ENCODE measurements at regions of chr17 and their contacts with region 1.

Region 1: GRCh38 chr17:55407641-55408566 is 13.7 kb downstream of the MMD start:
- DNase-seq: peak in 1 of 2 experiments; percentile 49
- H3K4me3 ChIP-seq: no peak overlapping the region
- H3K4me3 Mint-ChIP-seq: peak overlapping the region; percentile 52
- H3K27ac Mint-ChIP-seq: peak overlapping the region; percentile 72
- H3K4me1 ChIP-seq: peaks cover 35% of the 10 kb centered on the region
- H3K4me1 Mint-ChIP-seq: peaks cover 20% of the 10 kb centered on the region
- H3K27me3 ChIP-seq: no peaks in the 10 kb centered on the region
- H3K27me3 Mint-ChIP-seq: no peaks in the 10 kb centered on the region
- CTCF ChIP-seq: no peak

Region 2: GRCh38 chr17:55394357-55395021 is 13.4 kb before region 1 on chr17:
- CTCF ChIA-PET with region 1: no interaction called
- POLR2A ChIA-PET with region 1: no interaction called
- intact Hi-C with region 1: loop called (anchors 1 kb)
- DNase-seq: peak in 1 of 2 experiments; percentile 27
- H3K4me3 ChIP-seq: no peak overlapping the region
- H3K4me3 Mint-ChIP-seq: peak overlapping the region; percentile 8
- H3K27ac Mint-ChIP-seq: peak overlapping the region; percentile 54
- H3K4me1 ChIP-seq: peaks cover 9% of the 10 kb centered on the region
- H3K4me1 Mint-ChIP-seq: peaks cover 13% of the 10 kb centered on the region
- H3K27me3 ChIP-seq: no peaks in the 10 kb centered on the region
- H3K27me3 Mint-ChIP-seq: no peaks in the 10 kb centered on the region
- CTCF ChIP-seq: no peak

Region 3: GRCh38 chr17:55421179-55421934 is 13.5 kb after region 1 on chr17 and contains the start of gene MMD:
- CTCF ChIA-PET with region 1: no interaction called
- POLR2A ChIA-PET with region 1: no interaction called
- intact Hi-C with region 1: loop called (anchors 1 kb)
- DNase-seq: peak in 1 of 2 experiments; percentile 46
- H3K4me3 ChIP-seq: peak within 1 kb of the TSS; percentile 78
- H3K4me3 Mint-ChIP-seq: peak within 1 kb of the TSS; percentile 90
- H3K27ac Mint-ChIP-seq: peak within 1 kb of the TSS; percentile 81
- H3K4me1 ChIP-seq: peaks cover 19% of the 10 kb centered on the region
- H3K4me1 Mint-ChIP-seq: peaks cover 64% of the 10 kb centered on the region
- H3K27me3 ChIP-seq: no peaks in the 10 kb centered on the region
- H3K27me3 Mint-ChIP-seq: no peaks in the 10 kb centered on the region
- CTCF ChIP-seq: no peak
- total RNA-seq, gene MMD: 38.6 and 39.0 TPM in 2 replicates

Region 4: GRCh38 chr17:55433629-55434305 is 25.9 kb after region 1 on chr17:
- CTCF ChIA-PET with region 1: interaction called, 4 read pairs
- POLR2A ChIA-PET with region 1: interaction called, 3 read pairs
- intact Hi-C with region 1: loop called (anchors 1 kb)
- DNase-seq: peak; percentile 64 to 68
- H3K4me3 ChIP-seq: no peak overlapping the region
- H3K4me3 Mint-ChIP-seq: peak overlapping the region; percentile 58
- H3K27ac Mint-ChIP-seq: peak overlapping the region; percentile 94
- H3K4me1 ChIP-seq: peaks cover 48% of the 10 kb centered on the region
- H3K4me1 Mint-ChIP-seq: peaks cover 51% of the 10 kb centered on the region
- H3K27me3 ChIP-seq: no peaks in the 10 kb centered on the region
- H3K27me3 Mint-ChIP-seq: no peaks in the 10 kb centered on the region
- CTCF ChIP-seq: no peak

Region 5: DNA sequence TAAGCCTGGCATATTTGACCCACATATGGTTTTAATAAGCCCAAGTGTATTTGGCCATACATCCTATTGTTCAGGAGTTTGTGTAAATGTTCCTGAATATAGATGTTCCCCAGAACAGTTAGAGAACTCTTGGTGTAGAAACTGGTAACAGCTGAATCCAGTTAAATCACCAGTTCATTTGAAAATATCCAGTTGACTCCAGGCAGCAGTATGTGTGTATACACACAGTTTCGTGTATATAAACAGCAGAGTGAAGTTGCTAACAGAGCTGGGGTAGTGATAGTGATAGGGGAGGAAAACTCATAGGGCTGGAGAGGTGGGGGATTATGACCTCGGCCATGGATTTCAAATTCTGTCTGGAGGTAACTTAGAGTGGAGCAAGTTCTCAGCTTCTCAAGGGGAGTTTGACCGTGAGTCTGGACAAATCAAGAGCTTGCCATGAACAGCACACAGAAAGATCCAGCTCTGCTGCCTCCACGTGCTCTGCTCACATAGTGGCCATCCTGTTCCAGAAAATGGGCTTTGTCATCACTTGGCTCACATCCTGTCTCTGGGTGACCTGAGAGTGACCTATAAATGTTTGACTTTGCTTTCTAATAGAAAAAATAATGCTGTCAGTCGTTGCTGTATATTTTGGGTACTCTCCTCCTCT is 44.4 kb after region 1 on chr17:
- CTCF ChIA-PET with region 1: no interaction called
- POLR2A ChIA-PET with region 1: no interaction called
- intact Hi-C with region 1: loop called (anchors 2 kb)
- DNase-seq: no peak
- H3K4me3 ChIP-seq: no peak overlapping the region
- H3K4me3 Mint-ChIP-seq: no peak overlapping the region
- H3K27ac Mint-ChIP-seq: peak overlapping the region; percentile 51
- H3K4me1 ChIP-seq: peaks cover 77% of the 10 kb centered on the region
- H3K4me1 Mint-ChIP-seq: peaks cover 73% of the 10 kb centered on the region
- H3K27me3 ChIP-seq: no peaks in the 10 kb centered on the region
- H3K27me3 Mint-ChIP-seq: no peaks in the 10 kb centered on the region
- CTCF ChIP-seq: no peak

Region 6: GRCh38 chr17:55496094-55496881 is 88.4 kb after region 1 on chr17:
- CTCF ChIA-PET with region 1: no interaction called
- POLR2A ChIA-PET with region 1: no interaction called
- intact Hi-C with region 1: loop called (anchors 5 kb)
- DNase-seq: peak; percentile 56 to 63
- H3K4me3 ChIP-seq: no peak overlapping the region
- H3K4me3 Mint-ChIP-seq: peak overlapping the region; percentile 49
- H3K27ac Mint-ChIP-seq: peak overlapping the region; percentile 68
- H3K4me1 ChIP-seq: peaks cover 20% of the 10 kb centered on the region
- H3K4me1 Mint-ChIP-seq: peaks cover 20% of the 10 kb centered on the region
- H3K27me3 ChIP-seq: no peaks in the 10 kb centered on the region
- H3K27me3 Mint-ChIP-seq: no peaks in the 10 kb centered on the region
- CTCF ChIP-seq: no peak

Region 7: DNA sequence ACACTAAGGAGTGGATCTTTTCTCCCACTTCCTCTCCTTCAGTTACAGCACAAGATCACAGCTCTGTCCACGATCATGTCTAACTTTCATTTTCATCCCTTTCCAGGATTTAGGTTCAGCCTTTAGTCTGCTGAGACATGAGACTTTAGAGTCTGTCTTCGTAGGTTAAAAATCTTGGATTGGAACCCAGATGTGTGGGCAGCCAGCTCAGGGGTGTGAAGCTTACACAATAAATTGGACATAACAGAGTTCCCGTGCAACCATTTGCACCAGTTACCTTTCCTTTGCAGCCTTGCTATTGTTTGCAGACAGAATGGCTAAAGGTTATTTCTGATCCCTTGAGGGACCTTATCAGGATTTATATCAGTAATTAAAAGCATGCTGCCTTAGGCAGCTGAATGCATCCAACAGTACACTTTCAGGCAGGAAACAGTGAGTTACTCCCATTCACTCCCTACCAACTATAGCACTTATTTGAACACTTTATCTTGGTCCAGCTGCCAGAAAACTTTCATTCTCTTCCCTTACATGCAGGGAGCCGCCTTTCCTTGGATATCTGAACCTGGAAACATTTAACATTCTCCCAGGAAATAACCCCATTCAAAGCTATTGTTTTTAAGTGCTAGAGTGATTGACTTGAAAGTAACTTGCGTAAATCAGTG is 227.5 kb after region 1 on chr17:
- CTCF ChIA-PET with region 1: no interaction called
- POLR2A ChIA-PET with region 1: no interaction called
- intact Hi-C with region 1: no loop called
- DNase-seq: no peak
- H3K4me3 ChIP-seq: no peak overlapping the region
- H3K4me3 Mint-ChIP-seq: no peak overlapping the region
- H3K27ac Mint-ChIP-seq: no peak overlapping the region
- H3K4me1 ChIP-seq: no peaks in the 10 kb centered on the region
- H3K4me1 Mint-ChIP-seq: no peaks in the 10 kb centered on the region
- H3K27me3 ChIP-seq: no peaks in the 10 kb centered on the region
- H3K27me3 Mint-ChIP-seq: peaks cover 19% of the 10 kb centered on the region
- CTCF ChIP-seq: no peak

Region 8: GRCh38 chr17:55673743-55674506 is 266.0 kb after region 1 on chr17:
- CTCF ChIA-PET with region 1: no interaction called
- POLR2A ChIA-PET with region 1: no interaction called
- intact Hi-C with region 1: no loop called
- DNase-seq: no peak
- H3K4me3 ChIP-seq: no peak overlapping the region
- H3K4me3 Mint-ChIP-seq: no peak overlapping the region
- H3K27ac Mint-ChIP-seq: no peak overlapping the region
- H3K4me1 ChIP-seq: no peaks in the 10 kb centered on the region
- H3K4me1 Mint-ChIP-seq: no peaks in the 10 kb centered on the region
- H3K27me3 ChIP-seq: no peaks in the 10 kb centered on the region
- H3K27me3 Mint-ChIP-seq: peaks cover 26% of the 10 kb centered on the region
- CTCF ChIP-seq: no peak

Measured in Caco-2 (cell line).